ENCODE measurements at regions of chr11 and their contacts with region 1.

Region 1: GRCh38 chr11:72471005-72471898 is 36.9 kb upstream of the CLPB start:
- DNase-seq: peak; percentile 34 to 61 (median 53)
- H3K4me3 ChIP-seq: no peak overlapping the region
- H3K27ac ChIP-seq: no peak overlapping the region
- H3K4me1 ChIP-seq: no peaks in the 10 kb centered on the region
- H3K27me3 ChIP-seq: no peaks in the 10 kb centered on the region
- CTCF ChIP-seq: peak; percentile 32 to 57 (median 46)
- EP300 ChIP-seq: no peak
- POLR2A ChIP-seq: no peak

Region 2: GRCh38 chr11:72573072-72573854 is 102.0 kb after region 1 on chr11:
- intact Hi-C with region 1: loop called in 1 of 4 experiments (anchors 10 kb)
- DNase-seq: no peak
- H3K4me3 ChIP-seq: no peak overlapping the region
- H3K27ac ChIP-seq: no peak overlapping the region
- H3K4me1 ChIP-seq: no peaks in the 10 kb centered on the region
- H3K27me3 ChIP-seq: no peaks in the 10 kb centered on the region
- CTCF ChIP-seq: no peak
- EP300 ChIP-seq: no peak
- POLR2A ChIP-seq: no peak

Region 3: DNA sequence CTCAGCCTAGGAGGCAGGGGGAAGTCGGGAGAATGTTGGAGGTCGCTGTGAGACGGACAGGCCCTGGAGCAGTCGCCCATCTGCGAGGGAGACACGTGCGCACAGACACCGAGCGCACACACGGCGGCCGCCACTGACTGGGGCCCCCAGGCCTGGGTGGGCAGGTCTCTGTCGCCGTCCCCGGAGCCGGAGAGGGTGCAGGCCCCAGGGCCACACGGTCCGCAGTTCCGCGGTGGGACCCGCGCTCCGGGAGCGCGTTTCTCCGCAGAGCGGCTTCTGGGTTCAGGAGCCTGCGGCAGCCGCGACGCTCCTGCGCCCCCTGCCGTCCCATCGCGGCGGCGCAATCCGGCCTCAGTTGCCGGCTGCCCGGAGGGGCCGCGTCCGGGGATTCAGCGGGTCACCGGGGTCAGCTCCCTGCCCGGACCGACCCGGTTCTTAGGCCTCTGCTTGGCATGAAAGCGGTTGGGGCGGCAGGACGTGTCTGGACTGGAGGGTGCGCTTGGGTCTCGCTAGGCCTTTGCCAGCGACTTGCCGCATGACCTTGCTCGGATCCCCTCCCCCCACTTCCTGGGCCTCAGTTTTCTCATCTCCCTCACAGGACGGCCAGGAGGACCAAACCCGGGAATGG is 171.7 kb after region 1 on chr11:
- intact Hi-C with region 1: loop called in 2 of 4 experiments (anchors 10 kb)
- DNase-seq: peak; percentile 48 to 80 (median 67)
- H3K4me3 ChIP-seq: peak overlapping the region; percentile 36
- H3K27ac ChIP-seq: no peak overlapping the region
- H3K4me1 ChIP-seq: peaks cover 3% of the 10 kb centered on the region
- H3K27me3 ChIP-seq: no peaks in the 10 kb centered on the region
- CTCF ChIP-seq: peak; percentile 92 to 99 (median 96)
- EP300 ChIP-seq: no peak
- POLR2A ChIP-seq: no peak

Region 4: GRCh38 chr11:72668611-72669347 is 197.5 kb after region 1 on chr11:
- intact Hi-C with region 1: loop called in 1 of 4 experiments (anchors 10 kb)
- DNase-seq: no peak
- H3K4me3 ChIP-seq: no peak overlapping the region
- H3K27ac ChIP-seq: no peak overlapping the region
- H3K4me1 ChIP-seq: no peaks in the 10 kb centered on the region
- H3K27me3 ChIP-seq: no peaks in the 10 kb centered on the region
- CTCF ChIP-seq: no peak
- EP300 ChIP-seq: no peak
- POLR2A ChIP-seq: no peak

Region 5: DNA sequence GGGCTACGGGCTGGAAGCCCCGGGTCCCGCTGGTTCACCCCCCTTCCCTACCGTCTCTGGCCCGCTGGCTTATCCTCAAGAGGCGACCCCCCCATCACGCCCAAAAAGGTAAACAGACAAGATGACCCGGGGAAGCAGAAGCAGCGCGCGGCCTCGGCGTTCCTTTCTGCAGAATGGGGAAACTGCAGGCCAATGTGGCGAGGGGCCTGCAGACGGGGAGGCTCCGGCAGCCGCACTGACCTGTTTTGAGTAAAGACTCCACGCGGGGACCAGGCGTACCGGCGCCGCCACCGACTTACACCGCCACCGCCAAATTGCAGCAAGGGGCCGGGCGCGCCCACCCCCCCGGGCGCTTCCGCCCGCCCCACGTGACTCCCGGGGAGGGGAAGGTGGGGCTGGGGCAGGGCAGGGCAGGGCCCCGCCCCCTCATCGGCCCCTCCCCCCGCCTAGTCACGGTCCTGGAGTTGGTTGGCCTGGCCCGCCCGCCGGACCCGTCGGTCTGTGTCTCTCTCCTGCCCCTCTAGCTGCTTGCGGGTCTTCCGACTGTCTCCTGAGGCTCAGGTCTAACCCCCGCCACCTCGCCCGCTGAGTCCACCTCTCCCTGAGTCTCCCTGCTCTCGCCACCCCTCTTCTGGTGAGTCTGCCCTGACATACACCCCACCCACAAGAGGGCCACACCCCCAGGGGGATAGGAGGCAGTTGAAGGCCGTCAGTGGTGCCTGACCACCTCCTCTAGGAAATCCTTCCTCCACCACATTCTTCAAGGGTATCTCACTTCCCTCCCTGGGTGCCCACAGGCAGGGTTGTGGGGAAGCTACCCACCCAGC is 281.0 kb after region 1 on chr11 and contains the start of gene ARAP1:
- intact Hi-C with region 1: no loop called
- DNase-seq: peak; percentile 69 to 80 (median 78)
- H3K4me3 ChIP-seq: peak within 1 kb of the TSS; percentile 60
- H3K27ac ChIP-seq: peak within 1 kb of the TSS in 1 of 2 donors; percentile 48
- H3K4me1 ChIP-seq: peaks cover 10% of the 10 kb centered on the region
- H3K27me3 ChIP-seq: no peaks in the 10 kb centered on the region
- CTCF ChIP-seq: no peak
- EP300 ChIP-seq: no peak
- POLR2A ChIP-seq: no peak
- total RNA-seq, gene ARAP1: 62.1 to 162 (median 81.9) TPM